ENCODE measurements at regions of chr1 and their contacts with region 1.

Region 1: DNA sequence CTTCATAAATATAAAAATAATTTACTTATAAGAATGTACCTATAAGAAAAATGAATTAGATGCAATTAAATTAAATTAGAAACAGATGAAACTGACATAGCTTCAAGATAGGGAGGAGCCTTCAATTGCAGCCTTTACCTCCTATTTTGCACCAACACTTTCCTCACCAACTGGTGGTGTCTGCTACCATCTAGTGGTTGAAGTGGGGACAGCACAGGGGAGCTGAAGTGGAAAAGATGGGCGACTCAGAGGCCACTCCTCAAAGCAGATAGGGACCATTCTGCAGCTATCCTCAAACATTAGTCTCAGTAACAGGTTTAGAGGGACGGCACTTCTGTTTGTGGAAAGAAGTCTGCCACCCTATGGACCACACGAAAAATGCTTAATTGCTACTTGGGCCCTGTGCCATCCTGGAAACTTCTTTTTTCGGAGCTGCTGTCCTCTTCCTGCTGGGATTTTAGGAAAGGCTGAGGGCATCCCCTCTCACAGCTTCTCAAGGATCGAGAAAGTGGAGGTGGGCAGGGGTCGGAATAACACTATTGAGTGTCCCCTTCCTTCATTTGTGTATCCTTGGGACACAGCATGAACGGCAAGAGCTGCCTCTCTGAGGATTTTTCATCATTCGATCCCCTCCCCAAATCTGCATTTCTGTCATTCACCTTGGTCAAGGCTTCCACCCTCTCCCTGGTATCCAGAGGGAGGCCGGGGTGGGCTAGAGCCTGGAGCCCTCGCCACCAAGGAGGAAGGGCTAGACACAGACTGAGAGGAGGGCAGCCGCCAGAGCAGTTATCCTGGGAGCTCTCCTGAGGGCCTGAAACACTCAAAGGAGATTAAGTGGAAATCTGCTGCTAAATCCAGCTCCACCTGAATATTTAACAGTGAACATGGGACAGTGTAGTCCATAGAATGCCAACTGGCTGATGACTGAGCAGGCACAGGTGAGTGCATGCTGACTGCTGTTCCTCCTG is 9.6 kb downstream of the PROK1 start:
- DNase-seq: peak; percentile 55 to 67
- ATAC-seq: peak; percentile 60 to 83
- H3K4me3 ChIP-seq: no peak overlapping the region
- H3K27ac ChIP-seq: no peak overlapping the region
- H3K4me1 ChIP-seq: peaks cover 27% of the 10 kb centered on the region
- CTCF ChIP-seq: peak; percentile 90
- EP300 ChIP-seq: no peak
- POLR2A ChIP-seq: no peak
- RAD21 ChIP-seq: peak; percentile 94 to 97

Region 2: DNA sequence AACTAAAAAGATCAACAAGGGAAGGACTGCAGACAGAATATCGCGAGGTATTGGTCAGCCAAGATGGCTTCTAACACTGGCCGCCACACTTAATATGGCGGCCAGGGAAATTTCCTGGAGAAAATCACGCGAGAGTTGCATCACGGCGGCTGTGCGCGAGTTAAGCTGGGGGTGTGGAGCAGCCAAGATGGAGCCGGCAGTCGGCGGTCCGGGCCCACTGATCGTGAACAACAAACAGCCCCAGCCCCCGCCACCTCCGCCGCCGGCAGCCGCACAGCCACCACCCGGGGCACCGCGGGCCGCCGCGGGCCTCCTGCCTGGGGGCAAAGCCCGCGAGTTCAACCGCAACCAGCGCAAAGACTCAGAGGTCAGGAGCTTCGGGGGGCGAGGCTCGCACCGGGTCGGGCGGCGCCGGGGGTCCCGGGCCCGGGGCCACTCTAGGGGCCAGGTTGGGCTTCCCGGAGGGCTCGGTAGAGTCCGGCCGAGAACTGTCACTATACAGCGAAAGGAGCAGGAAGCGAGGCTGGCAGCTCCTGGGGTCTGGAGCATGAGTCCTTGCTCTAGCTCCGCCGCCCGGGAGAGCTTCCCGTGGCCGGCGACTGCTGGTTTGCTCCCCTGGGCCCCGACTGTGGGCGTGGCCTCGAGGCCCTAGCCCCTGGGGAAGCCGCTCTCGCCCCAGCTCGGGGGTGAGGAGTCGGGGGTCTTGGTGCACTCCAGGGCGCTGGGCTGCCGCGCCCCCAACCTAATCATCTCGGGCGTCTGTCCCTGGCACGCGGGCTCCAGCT is 425.9 kb before region 1 on chr1 and contains the start of gene STRIP1:
- CTCF ChIA-PET with region 1: interaction called, 11 read pairs
- POLR2A ChIA-PET with region 1: no interaction called
- DNase-seq: peak; percentile 80 to 94
- ATAC-seq: peak; percentile 88 to 92
- H3K4me3 ChIP-seq: peak within 1 kb of the TSS; percentile 89
- H3K27ac ChIP-seq: peak within 1 kb of the TSS; percentile 93 to 99
- H3K4me1 ChIP-seq: peaks cover 12% of the 10 kb centered on the region; the same call in 2 of the 3 replicates
- CTCF ChIP-seq: no peak
- EP300 ChIP-seq: no peak
- POLR2A ChIP-seq: peak; percentile 61
- RAD21 ChIP-seq: no peak
- polyA plus RNA-seq, gene STRIP1: 16.4 and 20.2 TPM in 2 replicates

Region 3: GRCh38 chr1:110196917-110197765 is 263.4 kb before region 1 on chr1:
- CTCF ChIA-PET with region 1: interaction called, 338 read pairs
- POLR2A ChIA-PET with region 1: no interaction called
- DNase-seq: peak; percentile 50 to 77
- ATAC-seq: peak; percentile 83 to 96
- H3K4me3 ChIP-seq: no peak overlapping the region
- H3K27ac ChIP-seq: no peak overlapping the region
- H3K4me1 ChIP-seq: no peaks in the 10 kb centered on the region
- CTCF ChIP-seq: peak; percentile 65
- EP300 ChIP-seq: no peak
- POLR2A ChIP-seq: no peak
- RAD21 ChIP-seq: peak; percentile 51 to 62

Region 4: GRCh38 chr1:110338886-110339406 is 121.6 kb before region 1 on chr1 and contains the start of gene RBM15:
- CTCF ChIA-PET with region 1: interaction called, 21 read pairs
- POLR2A ChIA-PET with region 1: interaction called, 3 read pairs
- DNase-seq: peak; percentile 89 to 100
- ATAC-seq: peak; percentile 75 to 87
- H3K4me3 ChIP-seq: peak within 1 kb of the TSS; percentile 91
- H3K27ac ChIP-seq: peak within 1 kb of the TSS; percentile 96 to 99
- H3K4me1 ChIP-seq: peaks cover 58% of the 10 kb centered on the region
- CTCF ChIP-seq: no peak
- EP300 ChIP-seq: no peak
- POLR2A ChIP-seq: no peak
- RAD21 ChIP-seq: no peak
- polyA plus RNA-seq, gene RBM15: 14.0 and 15.0 TPM in 2 replicates

Region 5: GRCh38 chr1:110407260-110408210 is 53.0 kb before region 1 on chr1 and contains the start of gene LAMTOR5:
- CTCF ChIA-PET with region 1: interaction called, 326 read pairs
- POLR2A ChIA-PET with region 1: interaction called, 4 read pairs
- DNase-seq: peak; percentile 61 to 94
- ATAC-seq: peak; percentile 95 to 96
- H3K4me3 ChIP-seq: peak within 1 kb of the TSS; percentile 98
- H3K27ac ChIP-seq: peak within 1 kb of the TSS; percentile 98 to 99
- H3K4me1 ChIP-seq: peaks cover 14% of the 10 kb centered on the region
- CTCF ChIP-seq: no peak
- EP300 ChIP-seq: no peak
- POLR2A ChIP-seq: peak; percentile 69
- RAD21 ChIP-seq: peak; percentile 31 to 49; a peak in 3 of 5 replicates
- polyA plus RNA-seq, gene LAMTOR5: 256 and 314 TPM in 2 replicates

Region 6: DNA sequence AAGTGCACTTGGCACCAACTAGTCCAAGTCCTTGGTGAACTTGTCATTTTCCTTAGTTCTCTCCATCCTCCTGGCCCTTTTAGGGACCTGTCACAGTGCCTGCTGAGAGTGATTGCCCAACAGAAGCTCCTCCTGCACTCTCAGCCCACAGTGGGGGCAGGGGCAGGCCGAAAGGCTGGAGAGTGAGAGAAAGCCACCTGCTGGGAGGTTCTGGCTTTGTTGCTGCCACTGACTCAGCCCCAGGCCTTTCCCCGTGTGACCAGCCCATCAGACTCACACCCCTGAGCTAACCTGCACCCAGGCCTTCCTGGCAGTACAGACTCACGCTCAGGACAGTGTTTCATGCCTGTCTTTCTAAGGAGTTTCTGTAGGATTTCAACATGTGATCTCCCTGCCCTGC is 26.7 kb before region 1 on chr1:
- CTCF ChIA-PET with region 1: interaction called, 38 read pairs
- POLR2A ChIA-PET with region 1: no interaction called
- DNase-seq: peak; percentile 54 to 64
- ATAC-seq: peak; percentile 96 to 97
- H3K4me3 ChIP-seq: no peak overlapping the region
- H3K27ac ChIP-seq: peak overlapping the region; percentile 20 to 73; a peak in 4 of 6 replicates
- H3K4me1 ChIP-seq: peaks cover 12% of the 10 kb centered on the region
- CTCF ChIP-seq: peak; percentile 11; the same call in 1 of the 3 replicates
- EP300 ChIP-seq: no peak
- POLR2A ChIP-seq: no peak
- RAD21 ChIP-seq: 0 out of 5 replicates have a peak, but pooled peaks of 1 of the 2 experiments have one; percentile 29

Region 7: DNA sequence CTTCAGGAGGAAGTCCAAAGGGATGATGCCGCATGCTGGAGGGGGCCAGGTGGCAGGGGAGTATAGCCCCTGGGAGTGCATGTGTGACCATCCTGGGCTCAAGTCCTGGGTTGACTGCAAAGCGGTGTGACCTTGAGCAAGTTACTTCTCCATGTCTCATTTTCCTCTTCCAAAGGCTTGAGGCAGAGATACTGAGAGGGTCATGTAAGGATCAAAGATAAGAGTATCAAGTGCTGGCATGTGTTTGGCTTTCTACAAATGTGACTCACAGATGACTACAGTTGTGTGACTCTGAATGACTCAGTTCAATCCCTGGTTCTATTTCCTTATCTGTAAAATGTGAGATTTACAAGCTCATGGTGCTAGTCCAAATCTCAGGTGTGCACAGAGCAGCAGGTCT is 16.5 kb after region 1 on chr1:
- CTCF ChIA-PET with region 1: interaction called, 34 read pairs
- POLR2A ChIA-PET with region 1: no interaction called
- DNase-seq: peak; percentile 74 to 81
- ATAC-seq: peak; percentile 89 to 92
- H3K4me3 ChIP-seq: no peak overlapping the region
- H3K27ac ChIP-seq: peak overlapping the region; percentile 66 to 82
- H3K4me1 ChIP-seq: peaks cover 32% of the 10 kb centered on the region
- CTCF ChIP-seq: no peak
- EP300 ChIP-seq: no peak
- POLR2A ChIP-seq: no peak
- RAD21 ChIP-seq: no peak

Measured in A549 (cell line).